Activated CD4-positive, alpha-beta memory T cell treated with anti-CD3 and anti-CD28 coated beads, Interleukin-2, amount 10 ng/mL, durations not matched to agents 7 days and 5 days (primary cell): ENCODE measurements at regions of chr3 and their contacts with region 1.

Region 1: GRCh38 chr3:196639483-196640296 is at the start of gene NRROS:
- DNase-seq: peak; percentile 82
- H3K4me3 Mint-ChIP-seq: peak within 1 kb of the TSS; percentile 73
- H3K27ac Mint-ChIP-seq: peak within 1 kb of the TSS; percentile 86
- H3K4me1 Mint-ChIP-seq: peaks cover 65% of the 10 kb centered on the region
- H3K27me3 Mint-ChIP-seq: no peaks in the 10 kb centered on the region
- total RNA-seq, gene NRROS: 50.1 to 52.8 TPM

Region 2: DNA sequence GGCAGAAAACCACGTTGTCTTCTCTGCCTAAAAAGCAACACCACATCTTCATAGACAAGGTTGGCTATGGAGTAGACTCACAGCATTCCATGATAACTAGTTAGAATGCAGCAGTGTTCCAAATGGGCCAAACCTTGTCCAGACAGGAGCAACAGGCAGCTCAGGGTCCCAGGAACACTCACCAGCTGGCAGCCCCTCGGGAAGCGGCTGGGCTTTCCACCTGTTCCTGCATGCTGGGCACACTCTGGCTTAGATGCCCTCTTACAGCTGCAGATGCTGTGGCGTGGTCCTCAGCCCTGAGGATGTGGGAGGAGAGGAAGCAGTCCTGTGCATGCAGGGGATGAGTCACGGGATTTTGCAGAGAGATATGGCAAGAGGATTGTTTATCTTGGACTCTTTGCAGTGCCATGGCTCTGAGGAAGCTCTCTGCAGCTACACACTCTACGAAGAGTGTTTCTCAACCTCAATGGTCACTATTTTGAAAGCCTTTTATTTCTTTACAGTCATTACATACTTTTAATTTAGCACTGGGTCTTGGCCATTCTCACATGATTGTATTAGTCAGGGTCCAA is 11.1 kb after region 1 on chr3:
- CTCF ChIA-PET with region 1: no interaction called
- POLR2A ChIA-PET with region 1: interaction called, 11 read pairs
- DNase-seq: no peak
- H3K4me3 Mint-ChIP-seq: no peak overlapping the region
- H3K27ac Mint-ChIP-seq: peak overlapping the region; percentile 42
- H3K4me1 Mint-ChIP-seq: peaks cover 60% of the 10 kb centered on the region
- H3K27me3 Mint-ChIP-seq: no peaks in the 10 kb centered on the region